Spleen (tissue), 13 donors: ENCODE measurements at regions of chr5 and their contacts with region 1.

Region 1: DNA sequence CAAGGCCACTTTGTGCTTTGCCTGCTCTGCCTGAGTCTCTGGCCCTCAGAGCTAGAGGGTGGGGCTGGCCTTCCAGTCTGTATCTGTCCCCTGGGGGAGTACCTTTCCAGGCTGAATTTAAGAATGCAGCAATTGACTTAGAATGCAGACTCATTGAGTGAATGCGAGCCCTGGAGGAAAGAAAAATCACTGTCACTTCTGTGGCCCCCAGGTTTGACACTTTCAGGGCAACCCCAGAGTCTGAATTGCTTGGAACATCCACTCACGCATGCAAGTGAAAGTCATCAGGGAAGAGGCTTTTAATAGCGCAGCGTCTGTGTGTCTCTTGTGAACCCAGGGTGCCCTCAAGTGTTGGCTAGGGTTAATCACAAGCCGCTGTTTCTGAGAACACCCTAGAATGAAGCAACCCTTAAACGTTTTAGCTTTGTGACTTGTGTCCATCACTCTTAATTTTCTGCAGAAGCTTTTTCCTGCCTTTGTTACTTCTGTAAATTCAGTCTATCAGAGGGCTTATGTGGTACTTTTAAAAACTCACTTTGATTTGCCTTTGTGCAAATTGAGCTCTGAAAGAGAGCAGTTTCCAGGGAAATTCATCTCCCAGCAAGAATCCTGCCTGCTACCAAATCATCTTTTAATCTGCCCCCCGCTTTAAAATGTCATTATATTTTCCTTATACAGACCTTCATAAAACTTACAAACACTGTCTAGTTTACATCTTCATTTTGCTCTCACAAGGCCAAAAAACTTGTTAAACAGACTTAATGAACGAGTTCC is 146.8 kb upstream of the IQGAP2 start:
- DNase-seq: no peak
- H3K4me3 ChIP-seq: peak overlapping the region in 1 of 8 donors; percentile 11
- H3K27ac ChIP-seq: no peak overlapping the region
- H3K4me1 ChIP-seq: peaks cover 0 to 12% (median 8%) of the 10 kb centered on the region in 6 donors
- H3K27me3 ChIP-seq: peaks cover 0 to 8% (median 0%) of the 10 kb centered on the region in 7 donors
- CTCF ChIP-seq: peak; percentile 10 to 71 (median 57)
- POLR2A ChIP-seq: no peak

Region 2: DNA sequence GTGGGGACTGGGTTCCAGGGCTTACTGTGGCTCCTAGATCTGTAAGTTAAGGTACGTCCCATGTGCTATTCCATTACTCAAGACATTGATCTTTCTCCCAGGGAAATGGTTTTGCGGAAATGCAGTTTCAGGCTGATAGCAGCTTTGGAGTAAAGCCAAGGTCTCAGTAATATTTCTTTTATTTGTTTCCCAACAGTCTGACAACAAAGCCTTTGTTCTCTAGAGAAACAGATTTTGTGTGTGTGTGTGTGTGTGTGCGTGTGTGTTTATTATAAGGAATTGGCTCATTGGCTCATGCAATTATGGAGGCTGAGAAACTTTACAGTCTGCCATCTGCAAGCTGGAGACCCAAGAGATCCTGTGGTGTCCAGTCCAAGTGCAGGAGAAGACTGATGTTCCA is 527.0 kb before region 1 on chr5:
- intact Hi-C with region 1: loop called (anchors 10 kb)
- DNase-seq: no peak
- H3K4me3 ChIP-seq: no peak overlapping the region
- H3K27ac ChIP-seq: peak overlapping the region in 5 of 8 donors; percentile 44 to 67 (median 61)
- H3K4me1 ChIP-seq: no peaks in the 10 kb centered on the region
- H3K27me3 ChIP-seq: no peaks in the 10 kb centered on the region
- CTCF ChIP-seq: no peak
- POLR2A ChIP-seq: no peak

Region 3: GRCh38 chr5:76457674-76458485 is 201.6 kb after region 1 on chr5:
- intact Hi-C with region 1: no loop called
- DNase-seq: no peak
- H3K4me3 ChIP-seq: no peak overlapping the region
- H3K27ac ChIP-seq: no peak overlapping the region
- H3K4me1 ChIP-seq: peaks cover 0 to 25% (median 0%) of the 10 kb centered on the region in 6 donors
- H3K27me3 ChIP-seq: no peaks in the 10 kb centered on the region
- CTCF ChIP-seq: no peak
- POLR2A ChIP-seq: no peak